ENCODE measurements at regions of chr2 and their contacts with region 1.

Region 1: GRCh38 chr2:96554293-96555145 is 18.0 kb downstream of the ARID5A start:
- DNase-seq: peak; percentile 67
- ATAC-seq: peak; percentile 85
- H3K4me3 Mint-ChIP-seq: no peak overlapping the region
- H3K27ac Mint-ChIP-seq: no peak overlapping the region
- H3K4me1 Mint-ChIP-seq: peaks cover 17% of the 10 kb centered on the region
- H3K27me3 Mint-ChIP-seq: no peaks in the 10 kb centered on the region
- CTCF ChIP-seq: peak; percentile 74

Region 2: DNA sequence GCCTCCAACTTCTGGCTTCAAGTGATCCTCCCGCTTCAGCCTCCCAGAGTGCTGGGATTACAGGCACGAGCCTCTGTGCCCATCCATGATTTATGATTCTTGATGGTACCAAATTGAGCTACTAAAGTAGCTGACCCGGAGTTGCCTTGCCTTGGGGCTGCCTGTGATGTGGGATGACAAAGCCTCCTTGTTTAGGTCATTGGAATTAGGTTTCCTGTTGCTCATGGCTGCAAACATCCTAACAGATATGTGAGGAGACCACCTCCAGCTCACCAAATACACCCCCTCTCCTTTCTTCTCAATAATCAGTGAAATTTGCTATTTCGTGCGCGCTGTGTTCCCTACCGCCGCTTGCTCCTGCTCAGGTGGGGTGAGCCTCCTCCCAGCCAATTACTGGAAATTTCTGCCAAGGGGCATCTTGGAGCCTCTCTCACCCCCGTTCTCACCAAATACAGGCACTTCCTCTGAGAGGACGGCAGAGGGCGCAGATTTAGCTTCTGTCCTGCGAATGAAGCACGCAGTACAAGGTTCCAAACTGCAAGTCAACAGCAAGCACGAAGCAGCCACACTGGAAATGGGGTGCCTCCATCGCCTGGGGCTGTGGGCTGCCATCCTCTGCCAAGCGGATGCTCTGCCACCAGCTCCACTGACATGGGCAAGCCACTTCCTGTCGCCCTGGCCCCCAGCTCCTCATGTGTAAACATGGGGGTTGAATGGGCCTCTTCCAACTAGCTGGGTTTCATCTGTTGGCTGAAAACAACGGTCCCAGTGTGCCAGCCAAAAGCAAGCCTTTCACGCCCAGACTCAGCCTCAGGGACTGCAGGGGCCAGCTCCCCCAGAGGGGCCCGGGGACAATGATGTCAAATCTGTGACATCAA is 147.2 kb before region 1 on chr2:
- CTCF ChIA-PET with region 1: interaction called, 42 read pairs
- POLR2A ChIA-PET with region 1: interaction called, 3 read pairs
- intact Hi-C with region 1: loop called (anchors 1 kb)
- DNase-seq: peak; percentile 48
- ATAC-seq: peak; percentile 85
- H3K4me3 Mint-ChIP-seq: no peak overlapping the region
- H3K27ac Mint-ChIP-seq: no peak overlapping the region
- H3K4me1 Mint-ChIP-seq: peaks cover 7% of the 10 kb centered on the region
- H3K27me3 Mint-ChIP-seq: no peaks in the 10 kb centered on the region
- CTCF ChIP-seq: no peak

Region 3: DNA sequence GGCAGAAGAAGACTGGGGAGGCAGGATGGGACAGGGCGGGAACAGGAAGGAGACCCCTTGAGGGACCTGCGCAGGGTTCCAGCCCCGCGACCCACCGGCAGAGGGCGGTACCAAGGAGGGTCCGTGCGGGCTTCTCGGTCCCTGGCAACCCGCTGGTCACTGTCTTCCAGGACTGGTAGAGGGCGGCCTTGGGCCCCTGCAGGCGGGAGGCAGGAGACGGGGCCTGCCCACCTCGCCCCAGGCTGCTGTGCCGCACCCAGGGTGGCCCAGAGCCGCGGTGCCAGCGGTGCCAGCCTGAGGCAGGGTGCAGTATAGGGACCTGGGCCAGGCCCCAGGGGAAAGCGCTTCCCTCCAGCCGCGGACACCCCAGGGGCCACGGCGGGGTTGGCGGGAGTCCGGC is 83.9 kb before region 1 on chr2:
- CTCF ChIA-PET with region 1: interaction called, 9 read pairs
- POLR2A ChIA-PET with region 1: no interaction called
- intact Hi-C with region 1: loop called (anchors 1 kb)
- DNase-seq: peak; percentile 52
- ATAC-seq: peak; percentile 76
- H3K4me3 Mint-ChIP-seq: no peak overlapping the region
- H3K27ac Mint-ChIP-seq: no peak overlapping the region
- H3K4me1 Mint-ChIP-seq: peaks cover 7% of the 10 kb centered on the region
- H3K27me3 Mint-ChIP-seq: peaks cover 7% of the 10 kb centered on the region
- CTCF ChIP-seq: peak; percentile 50

Region 4: GRCh38 chr2:96527286-96528005 is 27.1 kb before region 1 on chr2:
- CTCF ChIA-PET with region 1: interaction called, 34 read pairs
- POLR2A ChIA-PET with region 1: interaction called, 42 read pairs
- intact Hi-C with region 1: loop called (anchors 1 kb)
- DNase-seq: peak; percentile 57
- ATAC-seq: peak; percentile 47
- H3K4me3 Mint-ChIP-seq: peak overlapping the region; percentile 83
- H3K27ac Mint-ChIP-seq: peak overlapping the region; percentile 83
- H3K4me1 Mint-ChIP-seq: peaks cover 56% of the 10 kb centered on the region
- H3K27me3 Mint-ChIP-seq: peaks cover 3% of the 10 kb centered on the region
- CTCF ChIP-seq: no peak

Measured in activated B cell treated with CpG ODN at 0.5 μM for 24 hours (primary cell).